ENCODE measurements at regions of chr10 and their contacts with region 1.

Region 1: GRCh38 chr10:110610308-110610774 is 33.8 kb upstream of the RBM20 start:
- DNase-seq: peak; percentile 76
- H3K4me3 ChIP-seq: no peak overlapping the region
- H3K27ac ChIP-seq: no peak overlapping the region
- H3K4me1 ChIP-seq: peaks cover 29% of the 10 kb centered on the region
- CTCF ChIP-seq: peak; percentile 98

Region 2: DNA sequence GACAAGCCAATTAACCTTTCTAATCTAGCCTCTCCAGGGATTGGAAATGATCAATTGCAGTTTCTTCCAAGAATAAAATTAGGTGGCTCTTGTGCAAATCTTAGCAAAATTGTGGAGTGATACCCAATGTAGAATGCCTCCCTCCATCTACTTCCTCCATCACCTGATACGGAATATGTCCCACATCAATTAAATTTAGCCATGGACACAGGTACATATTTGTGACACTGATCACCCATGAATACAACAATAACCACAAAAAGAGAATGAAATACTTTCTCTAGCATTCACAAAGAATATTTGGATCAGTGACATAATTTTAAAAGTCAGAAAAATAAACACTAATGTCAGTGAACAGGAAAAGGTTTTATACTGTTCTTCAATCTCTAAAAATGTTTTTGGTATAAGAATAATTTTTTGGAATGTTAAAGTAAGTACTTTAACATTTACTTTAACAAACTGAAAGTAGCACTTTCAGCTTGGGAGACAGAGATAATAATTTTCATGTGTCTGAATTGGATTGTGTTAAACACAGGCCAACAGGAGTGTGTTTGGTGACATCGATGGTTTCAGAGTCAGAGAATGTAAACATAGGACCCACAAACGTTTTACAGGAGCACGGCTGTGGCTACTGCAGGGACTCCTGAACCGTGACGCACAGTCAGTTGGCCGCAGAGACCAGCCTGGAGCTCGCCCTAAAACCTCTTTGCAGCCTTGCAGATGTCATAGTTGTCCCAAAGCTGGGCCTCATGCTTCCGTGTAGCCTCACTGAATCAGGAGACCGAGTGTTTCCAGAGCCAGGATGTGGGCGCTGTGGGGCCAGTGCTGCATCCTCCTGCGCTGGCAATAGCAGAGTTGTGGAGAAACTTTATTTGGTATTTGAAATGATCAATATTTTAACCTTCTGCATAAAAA is 41.0 kb after region 1 on chr10:
- CTCF ChIA-PET with region 1: no interaction called
- POLR2A ChIA-PET with region 1: interaction called, 9 read pairs
- intact Hi-C with region 1: loop called (anchors 1 kb)
- DNase-seq: peak; percentile 71
- H3K4me3 ChIP-seq: peak overlapping the region; percentile 43
- H3K27ac ChIP-seq: peak overlapping the region; percentile 85
- H3K4me1 ChIP-seq: peaks cover 80% of the 10 kb centered on the region
- CTCF ChIP-seq: no peak; the same call in 1 of the 2 replicates

Region 3: GRCh38 chr10:110681023-110681681 is 70.8 kb after region 1 on chr10:
- CTCF ChIA-PET with region 1: interaction called, 3 read pairs
- POLR2A ChIA-PET with region 1: interaction called, 4 read pairs
- intact Hi-C with region 1: loop called (anchors 1 kb)
- DNase-seq: peak; percentile 61
- H3K4me3 ChIP-seq: no peak overlapping the region
- H3K27ac ChIP-seq: no peak overlapping the region
- H3K4me1 ChIP-seq: peaks cover 24% of the 10 kb centered on the region
- CTCF ChIP-seq: peak; percentile 88

Region 4: DNA sequence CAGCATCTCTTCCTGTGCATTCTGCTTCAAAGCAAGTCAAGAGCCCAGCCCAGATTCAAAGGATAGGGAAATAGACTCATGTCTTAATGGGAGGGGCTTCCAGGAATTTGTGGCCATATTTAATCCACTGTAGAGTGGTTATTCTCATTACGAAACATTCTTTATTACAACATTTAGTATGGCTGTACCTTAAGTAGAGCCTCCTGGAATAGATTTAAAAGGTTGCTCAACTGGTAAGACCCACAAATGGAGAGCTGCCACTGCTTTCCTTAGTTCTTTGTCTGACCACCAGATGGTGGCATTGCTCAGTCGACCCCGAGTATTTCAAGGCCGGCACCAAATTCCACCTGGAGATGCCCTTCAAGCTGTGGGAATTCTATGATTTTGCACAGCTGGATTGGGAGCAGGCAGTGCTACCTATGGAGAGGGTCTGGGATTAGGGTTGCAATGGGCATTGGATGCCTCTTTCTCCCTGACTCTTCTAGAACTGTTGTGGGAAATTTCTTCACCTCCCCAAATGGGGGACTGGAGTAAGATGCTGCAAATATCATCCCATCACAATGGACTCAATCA is 136.0 kb after region 1 on chr10:
- CTCF ChIA-PET with region 1: interaction called, 3 read pairs
- POLR2A ChIA-PET with region 1: interaction called, 3 read pairs
- intact Hi-C with region 1: loop called (anchors 1 kb)
- DNase-seq: peak; percentile 71
- H3K4me3 ChIP-seq: no peak overlapping the region
- H3K27ac ChIP-seq: no peak overlapping the region
- H3K4me1 ChIP-seq: peaks cover 58% of the 10 kb centered on the region
- CTCF ChIP-seq: peak; percentile 99

Region 5: DNA sequence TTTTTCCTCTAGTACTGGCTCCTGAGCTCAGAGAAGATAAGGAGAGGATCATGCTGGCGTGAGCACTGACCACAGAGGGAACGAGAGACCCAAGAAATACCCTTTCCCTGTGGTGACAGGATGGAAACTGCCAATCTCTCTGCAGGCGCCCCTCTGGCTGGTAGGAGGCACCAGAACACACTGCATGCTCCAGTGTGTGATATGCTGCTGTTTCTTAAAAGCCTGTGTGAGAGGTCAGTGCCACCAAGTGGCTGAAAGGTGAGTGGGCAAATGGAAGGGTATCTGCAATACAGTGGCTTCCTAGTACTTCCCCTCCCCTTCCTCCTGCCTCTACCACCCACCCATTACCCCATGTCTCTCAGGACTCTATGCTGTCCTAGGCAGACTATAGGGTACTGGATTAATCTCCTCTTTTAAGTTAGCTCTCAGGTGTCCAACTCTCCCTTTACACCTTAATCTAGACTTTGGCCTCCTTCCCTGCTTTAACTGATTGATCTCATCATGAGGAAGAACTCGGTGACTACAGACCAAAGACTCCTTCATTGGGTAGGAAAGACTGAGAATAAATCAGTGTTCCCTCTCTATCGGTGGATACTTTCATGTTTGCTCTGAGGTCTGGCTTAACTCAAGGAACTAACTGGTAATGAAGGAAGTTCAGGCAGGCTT is 750.1 kb after region 1 on chr10:
- CTCF ChIA-PET with region 1: no interaction called
- POLR2A ChIA-PET with region 1: no interaction called
- intact Hi-C with region 1: loop called (anchors 2 kb)
- DNase-seq: peak; percentile 64
- H3K4me3 ChIP-seq: no peak overlapping the region
- H3K27ac ChIP-seq: no peak overlapping the region
- H3K4me1 ChIP-seq: no peaks in the 10 kb centered on the region
- CTCF ChIP-seq: peak; percentile 80